Activated CD4-positive, alpha-beta T cell treated with anti-CD3 and anti-CD28 coated beads for 36 hours (primary cell): ENCODE measurements at regions of chr16 and their contacts with region 1.

Region 1: DNA sequence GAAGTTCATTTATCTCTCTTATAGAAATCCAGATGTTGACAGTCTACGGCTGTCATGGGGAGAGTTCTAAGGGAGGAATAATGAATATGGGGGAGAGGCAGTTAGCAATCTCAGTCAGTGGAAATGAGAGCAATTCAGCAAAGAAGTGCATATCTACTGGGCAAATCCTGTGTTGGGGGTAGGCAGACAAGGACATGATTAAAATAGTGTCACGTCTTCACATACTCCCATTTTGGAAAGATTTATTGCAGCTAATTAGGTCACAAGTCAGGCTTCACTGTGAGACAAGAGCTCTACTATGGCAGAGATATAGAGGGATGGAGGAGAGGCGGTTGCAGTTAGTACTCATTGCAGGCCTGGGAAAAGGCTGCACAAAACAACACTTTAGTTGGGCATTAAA is 29.8 kb downstream of the LRRC36 start:
- DNase-seq: no peak
- ATAC-seq: no peak
- H3K4me3 Mint-ChIP-seq: no peak overlapping the region
- H3K27ac Mint-ChIP-seq: no peak overlapping the region
- H3K4me1 Mint-ChIP-seq: peaks cover 2% of the 10 kb centered on the region
- H3K27me3 Mint-ChIP-seq: peaks cover 6% of the 10 kb centered on the region

Region 2: GRCh38 chr16:66824006-66824405 is 532.4 kb before region 1 on chr16:
- CTCF ChIA-PET with region 1: no interaction called
- POLR2A ChIA-PET with region 1: no interaction called
- intact Hi-C with region 1: no loop called
- DNase-seq: no peak
- ATAC-seq: no peak
- H3K4me3 Mint-ChIP-seq: no peak overlapping the region
- H3K27ac Mint-ChIP-seq: no peak overlapping the region
- H3K4me1 Mint-ChIP-seq: peaks cover 15% of the 10 kb centered on the region
- H3K27me3 Mint-ChIP-seq: no peaks in the 10 kb centered on the region

Region 3: GRCh38 chr16:67378642-67379041 is 22.2 kb after region 1 on chr16:
- CTCF ChIA-PET with region 1: interaction called, 3 read pairs
- POLR2A ChIA-PET with region 1: no interaction called
- intact Hi-C with region 1: loop called in 1 of 2 experiments (anchors 2 kb)
- DNase-seq: no peak
- ATAC-seq: no peak
- H3K4me3 Mint-ChIP-seq: no peak overlapping the region
- H3K27ac Mint-ChIP-seq: no peak overlapping the region
- H3K4me1 Mint-ChIP-seq: no peaks in the 10 kb centered on the region
- H3K27me3 Mint-ChIP-seq: peaks cover 4% of the 10 kb centered on the region

Region 4: DNA sequence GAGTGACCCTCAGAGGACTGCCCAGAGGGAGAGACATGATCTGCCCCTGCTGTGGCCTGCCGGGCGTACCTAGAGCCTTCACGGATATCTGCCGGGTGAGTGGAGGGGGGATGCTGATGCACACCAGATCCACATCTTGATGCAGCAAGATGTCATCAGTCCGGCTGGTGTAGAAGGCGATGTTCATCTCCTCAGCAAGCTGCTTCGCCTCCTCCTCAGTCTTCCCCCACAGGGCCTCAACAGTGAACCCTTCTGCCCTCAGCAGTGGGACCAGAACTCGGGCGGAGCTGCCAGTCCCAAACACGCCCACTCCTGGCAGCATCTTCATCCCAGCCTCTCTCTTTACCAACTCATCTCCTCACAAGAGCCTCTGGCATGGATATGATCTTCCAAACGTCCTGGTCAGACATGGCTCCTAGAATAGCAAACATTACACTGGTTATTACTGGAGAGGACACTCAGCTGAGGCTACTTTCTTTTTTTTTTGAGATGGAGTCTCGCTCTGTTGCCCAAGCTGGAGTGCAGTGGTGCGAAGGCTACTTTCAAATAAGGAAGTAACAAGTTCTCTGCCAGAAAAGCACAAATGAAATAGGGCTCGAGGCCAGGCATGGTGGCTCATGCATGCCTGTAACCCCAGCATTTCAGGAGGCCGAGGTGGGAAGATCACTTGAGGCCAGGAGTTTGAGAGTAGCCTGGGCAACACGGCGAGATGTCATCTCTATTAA is 329.2 kb after region 1 on chr16:
- CTCF ChIA-PET with region 1: no interaction called
- POLR2A ChIA-PET with region 1: no interaction called
- intact Hi-C with region 1: loop called in 1 of 2 experiments (anchors 10 kb)
- DNase-seq: no peak
- ATAC-seq: no peak
- H3K4me3 Mint-ChIP-seq: no peak overlapping the region
- H3K27ac Mint-ChIP-seq: no peak overlapping the region
- H3K4me1 Mint-ChIP-seq: peaks cover 8% of the 10 kb centered on the region
- H3K27me3 Mint-ChIP-seq: no peaks in the 10 kb centered on the region